PC-3 (cell line): ENCODE measurements at regions of chr11 and their contacts with region 1.

Region 1: GRCh38 chr11:111777094-111778046 is 11.2 kb upstream of the PPP2R1B start:
- DNase-seq: peak; percentile 81
- ATAC-seq: peak; percentile 98
- H3K4me3 ChIP-seq: no peak overlapping the region
- H3K27ac ChIP-seq: no peak overlapping the region
- H3K4me1 ChIP-seq: no peaks in the 10 kb centered on the region
- H3K27me3 ChIP-seq: no peaks in the 10 kb centered on the region
- CTCF ChIP-seq: peak; percentile 93

Region 2: DNA sequence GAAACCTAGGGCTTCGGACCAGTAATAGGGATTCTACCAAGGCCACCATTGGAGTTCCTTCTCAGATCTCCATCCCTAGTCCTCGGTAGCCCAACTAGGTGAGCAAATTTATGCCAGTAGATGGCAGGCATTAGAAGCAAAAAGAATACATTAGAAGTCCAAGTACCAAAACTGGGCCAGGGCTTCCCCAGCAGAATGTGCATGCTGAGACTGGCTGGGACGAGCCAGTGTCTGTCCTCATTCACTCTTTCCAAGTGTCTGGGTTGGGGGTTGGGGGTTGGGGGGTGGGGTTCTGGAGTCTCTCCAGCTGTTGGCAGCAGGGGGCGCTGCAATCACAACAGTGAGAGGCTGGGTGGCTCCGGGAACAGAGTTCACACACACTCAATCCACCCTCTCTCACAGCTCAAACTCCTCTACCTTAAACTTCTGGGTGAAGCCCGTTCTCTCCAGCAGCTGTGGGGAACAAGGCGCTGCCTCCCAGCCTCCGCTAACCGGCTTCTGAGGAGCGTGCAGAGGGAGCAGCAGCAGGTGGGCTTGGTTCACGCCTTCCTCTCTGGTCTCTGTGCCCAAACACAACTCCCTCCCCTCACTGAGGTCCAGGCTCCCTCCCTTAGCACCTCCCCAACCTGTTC is 322.7 kb before region 1 on chr11:
- CTCF ChIA-PET with region 1: no interaction called
- POLR2A ChIA-PET with region 1: no interaction called
- intact Hi-C with region 1: loop called (anchors 1 kb)
- DNase-seq: peak; percentile 80
- ATAC-seq: peak; percentile 90
- H3K4me3 ChIP-seq: no peak overlapping the region
- H3K27ac ChIP-seq: no peak overlapping the region
- H3K4me1 ChIP-seq: peaks cover 6% of the 10 kb centered on the region
- H3K27me3 ChIP-seq: no peaks in the 10 kb centered on the region
- CTCF ChIP-seq: peak; percentile 57

Region 3: DNA sequence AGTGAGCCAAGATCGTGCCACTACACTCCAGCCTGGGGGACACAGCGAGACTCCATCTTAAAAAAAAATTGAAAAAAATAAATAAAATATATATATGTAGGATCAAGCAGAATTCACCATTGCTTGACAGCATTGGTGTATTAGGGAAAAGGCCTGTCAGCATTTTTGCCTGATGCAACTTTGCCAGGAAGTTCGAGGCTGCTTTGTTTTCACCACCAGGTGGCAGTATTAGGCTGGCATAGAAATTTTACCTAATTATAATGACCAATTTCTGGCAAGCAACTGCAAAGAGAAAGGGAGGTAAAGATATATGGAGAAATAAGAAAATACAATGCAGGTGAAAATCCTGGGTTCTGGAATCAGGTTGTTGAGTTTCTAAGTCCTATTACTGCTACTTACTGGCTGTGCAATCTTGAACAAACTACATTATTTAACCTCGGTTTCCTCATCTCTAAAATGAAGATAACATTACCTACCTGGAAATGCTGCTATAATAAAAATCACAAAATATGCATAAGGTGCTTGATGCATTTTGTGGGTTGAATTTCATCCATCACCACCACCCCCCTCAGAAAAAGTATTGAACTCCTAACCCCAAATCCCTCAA is 212.2 kb before region 1 on chr11:
- CTCF ChIA-PET with region 1: no interaction called
- POLR2A ChIA-PET with region 1: no interaction called
- intact Hi-C with region 1: loop called (anchors 1 kb)
- DNase-seq: peak; percentile 94
- ATAC-seq: no peak
- H3K4me3 ChIP-seq: no peak overlapping the region
- H3K27ac ChIP-seq: no peak overlapping the region
- H3K4me1 ChIP-seq: peaks cover 32% of the 10 kb centered on the region
- H3K27me3 ChIP-seq: no peaks in the 10 kb centered on the region
- CTCF ChIP-seq: peak; percentile 88

Region 4: DNA sequence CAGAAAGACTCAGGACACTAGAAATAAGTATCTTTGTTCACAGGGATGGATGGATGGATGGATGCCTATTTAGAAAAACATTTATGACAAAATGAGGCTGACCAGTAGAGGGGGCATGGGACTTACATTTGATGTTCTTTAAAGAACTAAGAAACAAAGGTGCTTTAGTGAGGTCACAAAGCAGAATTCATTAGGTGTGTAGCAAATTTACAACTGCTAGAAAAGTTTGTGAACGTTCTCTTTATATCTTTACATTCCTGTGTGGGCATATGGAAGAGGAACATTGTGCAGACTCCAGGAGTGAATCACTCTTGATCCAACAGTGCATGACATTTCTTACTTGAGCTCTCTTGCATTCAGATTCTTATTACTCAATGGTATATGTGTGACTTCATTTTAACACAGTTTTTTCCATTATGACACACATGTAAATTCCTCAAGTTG is 191.0 kb before region 1 on chr11:
- CTCF ChIA-PET with region 1: interaction called, 3 read pairs
- POLR2A ChIA-PET with region 1: no interaction called
- intact Hi-C with region 1: loop called (anchors 1 kb)
- DNase-seq: peak; percentile 85
- ATAC-seq: peak; percentile 75
- H3K4me3 ChIP-seq: no peak overlapping the region
- H3K27ac ChIP-seq: no peak overlapping the region
- H3K4me1 ChIP-seq: peaks cover 5% of the 10 kb centered on the region; the same call in 1 of the 2 replicates
- H3K27me3 ChIP-seq: no peaks in the 10 kb centered on the region
- CTCF ChIP-seq: peak; percentile 92

Region 5: GRCh38 chr11:111601979-111602864 is 175.1 kb before region 1 on chr11 and contains the start of gene SIK2:
- CTCF ChIA-PET with region 1: interaction called, 4 read pairs
- POLR2A ChIA-PET with region 1: no interaction called
- intact Hi-C with region 1: loop called (anchors 1 kb)
- DNase-seq: peak; percentile 98
- ATAC-seq: peak; percentile 78
- H3K4me3 ChIP-seq: peak within 1 kb of the TSS; percentile 90
- H3K27ac ChIP-seq: peak within 1 kb of the TSS; percentile 61
- H3K4me1 ChIP-seq: peaks cover 19% of the 10 kb centered on the region
- H3K27me3 ChIP-seq: no peaks in the 10 kb centered on the region
- CTCF ChIP-seq: peak; percentile 88
- total RNA-seq, gene SIK2: 8.6 and 9.0 TPM in 2 replicates

Region 6: GRCh38 chr11:111841370-111842053 is 64.1 kb after region 1 on chr11:
- CTCF ChIA-PET with region 1: interaction called, 10 read pairs
- POLR2A ChIA-PET with region 1: no interaction called
- intact Hi-C with region 1: loop called (anchors 1 kb)
- DNase-seq: peak; percentile 92
- ATAC-seq: peak; percentile 69
- H3K4me3 ChIP-seq: no peak overlapping the region
- H3K27ac ChIP-seq: no peak overlapping the region
- H3K4me1 ChIP-seq: peaks cover 30% of the 10 kb centered on the region
- H3K27me3 ChIP-seq: no peaks in the 10 kb centered on the region
- CTCF ChIP-seq: peak; percentile 98

Region 7: GRCh38 chr11:111846636-111847035 is 69.3 kb after region 1 on chr11:
- CTCF ChIA-PET with region 1: interaction called, 10 read pairs
- POLR2A ChIA-PET with region 1: no interaction called
- intact Hi-C with region 1: loop called (anchors 1 kb)
- DNase-seq: peak; percentile 72
- ATAC-seq: peak; percentile 70
- H3K4me3 ChIP-seq: peak overlapping the region; percentile 15; the same call in 1 of the 2 replicates
- H3K27ac ChIP-seq: peak overlapping the region; percentile 85
- H3K4me1 ChIP-seq: peaks cover 37% of the 10 kb centered on the region
- H3K27me3 ChIP-seq: no peaks in the 10 kb centered on the region
- CTCF ChIP-seq: no peak